Gastrocnemius medialis (tissue), 4 donors: ENCODE measurements at regions of chr4 and their contacts with region 1.

Region 1: GRCh38 chr4:23909671-23910070 is 19.8 kb upstream of the PPARGC1A start:
- DNase-seq: no peak
- ATAC-seq: no peak
- H3K4me3 ChIP-seq: no peak overlapping the region
- H3K27ac ChIP-seq: no peak overlapping the region
- H3K4me1 ChIP-seq: peaks cover 6 to 8% of the 10 kb centered on the region in 2 donors
- H3K27me3 ChIP-seq: no peaks in the 10 kb centered on the region
- CTCF ChIP-seq: no peak
- POLR2A ChIP-seq: no peak

Region 2: GRCh38 chr4:23923840-23924239 is 14.2 kb after region 1 on chr4:
- in situ Hi-C with region 1: no loop called
- intact Hi-C with region 1: loop called (anchors 2 kb)
- DNase-seq: no peak
- ATAC-seq: peak in 1 of 2 donors; percentile 60
- H3K4me3 ChIP-seq: no peak overlapping the region
- H3K27ac ChIP-seq: no peak overlapping the region
- H3K4me1 ChIP-seq: peaks cover 0 to 3% of the 10 kb centered on the region in 2 donors
- H3K27me3 ChIP-seq: no peaks in the 10 kb centered on the region
- CTCF ChIP-seq: no peak
- POLR2A ChIP-seq: no peak

Region 3: GRCh38 chr4:24260923-24261581 is 351.4 kb after region 1 on chr4:
- in situ Hi-C with region 1: no loop called
- intact Hi-C with region 1: no loop called
- DNase-seq: peak; percentile 34 to 37
- ATAC-seq: peak; percentile 55 to 57
- H3K4me3 ChIP-seq: peak overlapping the region in 2 of 4 donors; percentile 15 to 26
- H3K27ac ChIP-seq: peak overlapping the region; percentile 62 to 77 (median 66)
- H3K4me1 ChIP-seq: peaks cover 32 to 43% of the 10 kb centered on the region in 2 donors
- H3K27me3 ChIP-seq: no peaks in the 10 kb centered on the region
- CTCF ChIP-seq: peak in 2 of 5 experiments; percentile 10 to 37
- POLR2A ChIP-seq: peak; percentile 15 to 39